Endothelial cell of umbilical vein (primary cell): ENCODE measurements at regions of chr12 and their contacts with region 1.

Region 1: GRCh38 chr12:50314629-50315312 is 31.5 kb upstream of the LIMA1 start:
- DNase-seq: peak; percentile 70
- H3K4me3 ChIP-seq: no peak overlapping the region
- H3K27ac ChIP-seq: no peak overlapping the region
- H3K4me1 ChIP-seq: no peaks in the 10 kb centered on the region
- H3K27me3 ChIP-seq: no peaks in the 10 kb centered on the region
- CTCF ChIP-seq: peak; percentile 50 to 68
- POLR2A ChIP-seq: no peak

Region 2: DNA sequence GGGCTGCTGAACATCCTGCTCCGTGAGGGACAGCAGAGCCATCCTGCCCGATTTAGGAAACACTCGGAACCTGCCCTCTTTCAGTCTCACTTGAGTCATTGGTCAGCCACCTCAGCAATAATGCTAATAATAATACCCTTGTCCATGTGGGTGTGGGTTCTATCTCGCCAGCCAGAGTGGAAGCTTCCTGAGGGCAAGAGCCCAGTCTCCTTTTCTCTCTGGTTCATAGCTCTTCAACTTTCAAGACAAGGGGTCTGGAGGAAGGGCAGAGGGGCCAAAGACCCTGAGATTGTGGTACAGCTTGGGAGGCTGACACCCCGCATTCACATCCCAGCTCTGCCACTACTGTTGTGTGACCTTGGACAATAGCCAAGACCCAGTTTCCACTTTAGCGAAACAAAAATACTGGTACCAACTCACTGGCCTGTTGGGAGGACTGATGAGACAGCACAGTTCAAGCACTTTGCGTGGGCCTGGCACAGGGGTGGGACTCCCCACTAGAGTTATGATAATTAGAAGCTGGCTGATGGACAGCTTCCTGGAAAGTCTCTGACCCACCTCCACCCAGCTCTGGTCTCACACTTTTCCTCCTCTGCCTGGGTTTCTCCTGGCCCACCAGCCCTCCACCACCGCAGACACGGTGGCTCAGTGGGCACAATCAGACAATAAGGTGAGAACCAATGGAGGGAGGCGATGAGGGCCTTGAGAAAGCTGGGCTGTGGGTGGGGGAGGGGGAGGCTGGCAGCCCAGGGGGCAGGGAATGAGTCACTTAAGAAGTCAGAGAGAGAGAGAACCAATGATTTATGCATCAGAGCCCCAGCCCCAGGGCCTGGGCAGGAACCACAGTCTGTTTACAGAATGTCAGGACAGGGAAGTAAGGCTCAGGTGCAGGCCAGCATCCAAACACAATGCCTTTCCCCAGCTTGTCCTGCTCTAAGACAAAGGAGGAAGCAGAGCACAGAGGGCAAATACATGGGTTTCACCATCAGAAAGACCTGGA is 420.7 kb before region 1 on chr12:
- CTCF ChIA-PET with region 1: no interaction called
- POLR2A ChIA-PET with region 1: no interaction called
- dilution Hi-C with region 1: no loop called
- intact Hi-C with region 1: no loop called
- DNase-seq: peak; percentile 62
- H3K4me3 ChIP-seq: no peak overlapping the region
- H3K27ac ChIP-seq: no peak overlapping the region
- H3K4me1 ChIP-seq: peaks cover 6% of the 10 kb centered on the region
- H3K27me3 ChIP-seq: peaks cover 0 to 9% of the 10 kb centered on the region in 2 experiments
- CTCF ChIP-seq: no peak
- POLR2A ChIP-seq: no peak

Region 3: DNA sequence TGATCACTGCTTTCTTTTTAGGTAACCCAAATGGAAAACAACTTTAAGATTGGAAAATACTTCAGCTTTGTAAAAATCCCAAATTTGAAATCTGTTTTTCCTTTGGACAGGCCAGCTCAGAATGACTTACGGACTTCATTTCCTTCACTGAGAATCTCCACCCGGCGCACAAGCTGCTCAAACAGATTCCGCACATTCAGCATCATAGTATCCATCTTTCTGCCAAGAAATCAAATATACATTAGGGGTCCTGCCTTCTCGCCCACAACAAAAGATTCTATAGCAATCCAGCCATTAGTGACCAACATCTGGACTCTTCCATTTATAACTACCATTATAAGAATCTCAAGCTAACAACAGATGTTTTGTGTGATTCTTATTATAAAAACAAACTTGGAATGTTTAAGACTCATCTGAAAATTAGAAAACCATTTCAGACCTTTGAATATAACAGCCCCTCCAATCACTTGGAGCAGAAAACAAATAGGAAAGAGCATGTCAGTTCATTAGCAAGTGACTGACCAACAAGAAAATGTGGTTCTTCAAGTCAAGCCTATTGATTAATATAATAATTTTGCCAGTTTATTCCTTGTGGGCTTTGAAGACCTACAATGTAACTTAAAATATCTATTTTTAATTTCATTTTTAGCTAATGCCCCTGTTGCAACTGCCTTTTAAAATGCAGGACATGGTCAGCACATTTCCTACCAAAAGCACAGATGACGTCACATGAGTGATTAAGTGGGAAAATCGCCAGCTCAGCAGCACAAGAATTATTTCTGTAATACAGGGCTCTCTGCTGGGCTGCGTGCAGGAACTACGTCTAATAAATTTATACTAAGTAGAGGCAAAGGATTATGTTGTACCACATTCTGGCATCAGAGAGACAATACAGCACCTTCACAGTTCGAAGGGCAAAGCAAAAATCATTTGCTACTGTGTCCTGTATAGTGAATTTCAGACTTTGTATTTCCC is 298.0 kb before region 1 on chr12:
- CTCF ChIA-PET with region 1: no interaction called
- POLR2A ChIA-PET with region 1: no interaction called
- dilution Hi-C with region 1: no loop called
- intact Hi-C with region 1: no loop called
- DNase-seq: peak; percentile 83
- H3K4me3 ChIP-seq: no peak overlapping the region
- H3K27ac ChIP-seq: no peak overlapping the region
- H3K4me1 ChIP-seq: peaks cover 7% of the 10 kb centered on the region
- H3K27me3 ChIP-seq: no peaks in the 10 kb centered on the region
- CTCF ChIP-seq: no peak
- POLR2A ChIP-seq: no peak

Region 4: GRCh38 chr12:50111693-50112455 is 202.9 kb before region 1 on chr12 and contains the start of gene COX14:
- CTCF ChIA-PET with region 1: interaction called, 44 read pairs
- POLR2A ChIA-PET with region 1: no interaction called
- dilution Hi-C with region 1: no loop called
- intact Hi-C with region 1: no loop called
- DNase-seq: peak; percentile 100
- H3K4me3 ChIP-seq: peak within 1 kb of the TSS; percentile 0 to 76 (median 59)
- H3K27ac ChIP-seq: peak within 1 kb of the TSS; percentile 6
- H3K4me1 ChIP-seq: peaks cover 9% of the 10 kb centered on the region
- H3K27me3 ChIP-seq: no peaks in the 10 kb centered on the region
- CTCF ChIP-seq: peak; percentile 98 to 99
- POLR2A ChIP-seq: peak; percentile 92
- total RNA-seq, gene COX14: 40.0 and 40.3 TPM in 2 replicates

Region 5: GRCh38 chr12:50167041-50167828 is 147.5 kb before region 1 on chr12 and contains the start of gene CERS5:
- CTCF ChIA-PET with region 1: interaction called, 11 read pairs
- POLR2A ChIA-PET with region 1: no interaction called
- dilution Hi-C with region 1: no loop called
- intact Hi-C with region 1: no loop called
- DNase-seq: peak; percentile 99
- H3K4me3 ChIP-seq: peak within 1 kb of the TSS; percentile 92 to 98 (median 93)
- H3K27ac ChIP-seq: peak within 1 kb of the TSS; percentile 75
- H3K4me1 ChIP-seq: peaks cover 7% of the 10 kb centered on the region
- H3K27me3 ChIP-seq: no peaks in the 10 kb centered on the region
- CTCF ChIP-seq: no peak
- POLR2A ChIP-seq: peak; percentile 91
- total RNA-seq, gene CERS5: 60.4 and 66.4 TPM in 2 replicates

Region 6: GRCh38 chr12:50211392-50212070 is 103.2 kb before region 1 on chr12:
- CTCF ChIA-PET with region 1: interaction called, 15 read pairs
- POLR2A ChIA-PET with region 1: no interaction called
- dilution Hi-C with region 1: no loop called
- intact Hi-C with region 1: no loop called
- DNase-seq: peak; percentile 70
- H3K4me3 ChIP-seq: peak overlapping the region in 1 of 3 experiments; percentile 11
- H3K27ac ChIP-seq: peak overlapping the region; percentile 72
- H3K4me1 ChIP-seq: peaks cover 45% of the 10 kb centered on the region
- H3K27me3 ChIP-seq: no peaks in the 10 kb centered on the region
- CTCF ChIP-seq: no peak
- POLR2A ChIP-seq: no peak

Region 7: DNA sequence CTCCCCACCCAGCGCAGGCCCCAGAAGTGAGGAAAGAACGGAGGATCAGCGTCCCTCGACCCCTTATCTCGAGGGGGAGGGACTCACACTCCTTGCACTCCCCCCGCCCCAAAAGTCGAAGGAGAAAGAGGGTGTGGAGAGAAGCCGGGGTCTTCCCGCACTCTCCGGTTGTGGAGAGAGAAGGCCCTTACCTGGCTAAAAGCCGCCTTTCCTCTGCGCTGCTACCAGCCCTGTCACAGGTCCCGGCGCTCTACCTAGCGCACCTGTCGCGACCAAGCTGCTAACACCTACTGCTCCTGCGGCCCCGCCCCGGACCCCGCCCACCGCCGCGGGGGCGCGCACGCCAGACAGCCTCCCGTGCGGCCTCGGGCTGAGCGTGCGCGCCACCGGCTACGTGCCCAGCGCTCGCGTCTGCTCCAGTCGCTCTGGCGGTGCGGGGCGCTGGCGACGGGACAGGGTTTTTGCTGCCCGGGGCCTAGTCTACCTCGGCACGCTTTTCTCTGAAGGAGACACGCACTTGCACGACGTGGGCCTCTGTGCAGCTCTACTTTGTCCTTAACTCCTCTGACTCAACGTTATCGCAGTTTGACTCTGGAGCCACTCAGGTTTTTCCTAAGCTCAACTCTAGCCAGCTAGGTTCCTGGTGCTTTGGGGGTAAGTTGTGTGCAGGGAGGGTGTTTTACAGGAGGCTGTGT is 31.4 kb before region 1 on chr12 and contains the start of gene LIMA1:
- CTCF ChIA-PET with region 1: interaction called, 18 read pairs
- POLR2A ChIA-PET with region 1: no interaction called
- dilution Hi-C with region 1: no loop called
- intact Hi-C with region 1: no loop called
- DNase-seq: peak; percentile 84
- H3K4me3 ChIP-seq: peak within 1 kb of the TSS; percentile 43 to 76 (median 52)
- H3K27ac ChIP-seq: peak within 1 kb of the TSS; percentile 4
- H3K4me1 ChIP-seq: peaks cover 15% of the 10 kb centered on the region
- H3K27me3 ChIP-seq: no peaks in the 10 kb centered on the region
- CTCF ChIP-seq: peak in 1 of 2 donors; percentile 50
- POLR2A ChIP-seq: peak; percentile 89
- total RNA-seq, gene LIMA1: 81.3 and 87.3 TPM in 2 replicates

Region 8: GRCh38 chr12:50351120-50352043 is 36.6 kb after region 1 on chr12:
- CTCF ChIA-PET with region 1: no interaction called
- POLR2A ChIA-PET with region 1: no interaction called
- dilution Hi-C with region 1: no loop called
- intact Hi-C with region 1: no loop called
- DNase-seq: no peak
- H3K4me3 ChIP-seq: no peak overlapping the region
- H3K27ac ChIP-seq: no peak overlapping the region
- H3K4me1 ChIP-seq: peaks cover 2% of the 10 kb centered on the region
- H3K27me3 ChIP-seq: no peaks in the 10 kb centered on the region
- CTCF ChIP-seq: no peak
- POLR2A ChIP-seq: no peak